IMR-90 (cell line): ENCODE measurements at regions of chr21 and their contacts with region 1.

Region 1: DNA sequence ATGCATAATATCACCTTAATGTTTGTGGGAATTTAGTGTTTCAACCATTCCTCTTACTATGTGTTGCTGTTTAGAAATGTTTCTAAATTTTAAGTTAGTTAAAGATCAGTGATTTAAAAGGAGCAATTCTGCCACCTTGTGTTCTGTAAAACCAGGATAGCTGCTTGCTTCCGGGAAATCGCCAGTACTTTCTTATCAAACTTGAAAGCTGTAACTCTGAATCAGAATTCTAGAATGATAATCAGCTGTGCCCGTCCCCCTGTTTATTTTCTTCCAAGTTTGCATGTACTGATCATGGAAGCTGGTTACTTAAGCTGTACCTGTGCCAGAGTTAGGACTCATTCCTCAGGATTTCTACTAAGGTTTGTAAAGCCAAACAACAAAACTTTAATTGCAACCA is 656.4 kb downstream of the LTN1 start:
- DNase-seq: peak; percentile 96
- ATAC-seq: peak; percentile 66
- H3K4me3 ChIP-seq: no peak overlapping the region
- H3K27ac ChIP-seq: peak overlapping the region; percentile 74; the same call in 1 of the 2 replicates
- H3K4me1 ChIP-seq: peaks cover 11% of the 10 kb centered on the region
- H3K27me3 ChIP-seq: no peaks in the 10 kb centered on the region
- CTCF ChIP-seq: peak; percentile 71
- POLR2A ChIP-seq: no peak
- RAD21 ChIP-seq: peak; percentile 76

Region 2: GRCh38 chr21:26850108-26850643 is 1486.1 kb before region 1 on chr21:
- CTCF ChIA-PET with region 1: interaction called, 6 read pairs
- POLR2A ChIA-PET with region 1: no interaction called
- dilution Hi-C with region 1: no loop called
- in situ Hi-C with region 1: loop called (anchors 5 kb)
- intact Hi-C with region 1: loop called (anchors 1 kb)
- DNase-seq: peak; percentile 59
- ATAC-seq: no peak
- H3K4me3 ChIP-seq: no peak overlapping the region
- H3K27ac ChIP-seq: peak overlapping the region; percentile 33; the same call in 1 of the 2 replicates
- H3K4me1 ChIP-seq: peaks cover 8% of the 10 kb centered on the region
- H3K27me3 ChIP-seq: no peaks in the 10 kb centered on the region
- CTCF ChIP-seq: peak; percentile 58
- POLR2A ChIP-seq: no peak; the same call in 1 of the 2 replicates
- RAD21 ChIP-seq: peak; percentile 72

Region 3: GRCh38 chr21:27564684-27565301 is 771.5 kb before region 1 on chr21:
- CTCF ChIA-PET with region 1: no interaction called
- POLR2A ChIA-PET with region 1: interaction called, 6 read pairs
- dilution Hi-C with region 1: no loop called
- in situ Hi-C with region 1: loop called (anchors 25 kb)
- intact Hi-C with region 1: loop called (anchors 5 kb)
- DNase-seq: peak; percentile 70
- ATAC-seq: peak; percentile 74
- H3K4me3 ChIP-seq: no peak overlapping the region
- H3K27ac ChIP-seq: peak overlapping the region; percentile 33; the same call in 1 of the 2 replicates
- H3K4me1 ChIP-seq: peaks cover 10% of the 10 kb centered on the region
- H3K27me3 ChIP-seq: no peaks in the 10 kb centered on the region
- CTCF ChIP-seq: peak; percentile 70
- POLR2A ChIP-seq: no peak
- RAD21 ChIP-seq: peak; percentile 79

Region 4: GRCh38 chr21:28069450-28069923 is 266.8 kb before region 1 on chr21:
- CTCF ChIA-PET with region 1: interaction called, 4 read pairs
- POLR2A ChIA-PET with region 1: no interaction called
- dilution Hi-C with region 1: no loop called
- in situ Hi-C with region 1: no loop called
- intact Hi-C with region 1: loop called (anchors 5 kb)
- DNase-seq: peak; percentile 83
- ATAC-seq: peak; percentile 88
- H3K4me3 ChIP-seq: no peak overlapping the region
- H3K27ac ChIP-seq: peak overlapping the region; percentile 46; the same call in 1 of the 2 replicates
- H3K4me1 ChIP-seq: peaks cover 8% of the 10 kb centered on the region
- H3K27me3 ChIP-seq: no peaks in the 10 kb centered on the region
- CTCF ChIP-seq: no peak
- POLR2A ChIP-seq: no peak
- RAD21 ChIP-seq: no peak

Region 5: GRCh38 chr21:28142697-28143096 is 193.6 kb before region 1 on chr21:
- CTCF ChIA-PET with region 1: no interaction called
- POLR2A ChIA-PET with region 1: no interaction called
- dilution Hi-C with region 1: no loop called
- in situ Hi-C with region 1: no loop called
- intact Hi-C with region 1: loop called (anchors 5 kb)
- DNase-seq: peak; percentile 91
- ATAC-seq: peak; percentile 96
- H3K4me3 ChIP-seq: no peak overlapping the region
- H3K27ac ChIP-seq: peak overlapping the region; percentile 85
- H3K4me1 ChIP-seq: peaks cover 8% of the 10 kb centered on the region
- H3K27me3 ChIP-seq: no peaks in the 10 kb centered on the region
- CTCF ChIP-seq: no peak
- POLR2A ChIP-seq: no peak
- RAD21 ChIP-seq: peak; percentile 33

Region 6: GRCh38 chr21:28522014-28522799 is 185.9 kb after region 1 on chr21:
- CTCF ChIA-PET with region 1: interaction called, 4 read pairs
- POLR2A ChIA-PET with region 1: no interaction called
- dilution Hi-C with region 1: no loop called
- in situ Hi-C with region 1: loop called (anchors 10 kb)
- intact Hi-C with region 1: loop called (anchors 1 kb)
- DNase-seq: peak; percentile 79
- ATAC-seq: peak; percentile 90
- H3K4me3 ChIP-seq: no peak overlapping the region
- H3K27ac ChIP-seq: peak overlapping the region; percentile 54; the same call in 1 of the 2 replicates
- H3K4me1 ChIP-seq: peaks cover 2% of the 10 kb centered on the region
- H3K27me3 ChIP-seq: no peaks in the 10 kb centered on the region
- CTCF ChIP-seq: peak; percentile 71
- POLR2A ChIP-seq: no peak
- RAD21 ChIP-seq: peak; percentile 82